AG04450 (cell line): ENCODE measurements at regions of chr7 and their contacts with region 1.

Region 1: DNA sequence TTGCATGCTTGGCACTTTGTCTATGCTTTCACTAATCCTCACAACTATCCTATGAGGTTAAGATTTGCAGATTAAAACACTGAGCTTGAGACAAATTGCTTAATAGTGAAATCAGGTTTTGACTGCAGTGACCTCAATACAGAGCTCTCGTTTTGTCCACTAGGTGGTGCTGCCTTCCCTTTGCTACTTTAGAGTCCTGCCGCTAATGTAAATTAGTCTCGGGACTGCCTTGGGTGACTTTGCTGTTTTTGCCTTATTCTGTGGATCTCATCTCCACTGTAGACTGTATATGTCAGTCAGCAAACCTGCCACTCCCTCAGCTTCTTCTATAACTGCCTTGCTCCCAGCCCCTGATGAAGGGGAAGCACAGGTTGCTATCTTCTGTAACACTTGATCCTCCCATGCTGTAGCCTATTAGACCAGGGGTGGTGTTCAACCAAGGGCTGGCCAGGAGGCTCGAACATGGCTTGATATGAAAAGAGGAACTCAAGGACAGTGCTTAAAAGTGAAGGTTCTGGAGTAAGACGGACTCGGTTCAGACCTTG is 26.0 kb downstream of the ASB4 start:
- DNase-seq: peak; percentile 27
- H3K4me3 ChIP-seq: no peak overlapping the region
- H3K27ac ChIP-seq: no peak overlapping the region
- H3K27me3 ChIP-seq: no peaks in the 10 kb centered on the region
- CTCF ChIP-seq: peak; percentile 92

Region 2: GRCh38 chr7:95491634-95492320 is 20.0 kb before region 1 on chr7:
- CTCF ChIA-PET with region 1: interaction called, 22 read pairs
- POLR2A ChIA-PET with region 1: no interaction called
- DNase-seq: no peak
- H3K4me3 ChIP-seq: no peak overlapping the region
- H3K27ac ChIP-seq: no peak overlapping the region
- H3K27me3 ChIP-seq: no peaks in the 10 kb centered on the region
- CTCF ChIP-seq: no peak

Region 3: GRCh38 chr7:95527033-95527775 is 15.4 kb after region 1 on chr7:
- CTCF ChIA-PET with region 1: interaction called, 108 read pairs
- POLR2A ChIA-PET with region 1: no interaction called
- DNase-seq: no peak
- H3K4me3 ChIP-seq: no peak overlapping the region
- H3K27ac ChIP-seq: no peak overlapping the region
- H3K27me3 ChIP-seq: no peaks in the 10 kb centered on the region
- CTCF ChIP-seq: peak; percentile 90

Region 4: GRCh38 chr7:95534796-95535195 is 23.0 kb after region 1 on chr7:
- CTCF ChIA-PET with region 1: interaction called, 108 read pairs
- POLR2A ChIA-PET with region 1: no interaction called
- DNase-seq: no peak
- H3K4me3 ChIP-seq: no peak overlapping the region
- H3K27ac ChIP-seq: no peak overlapping the region
- H3K27me3 ChIP-seq: peaks cover 2% of the 10 kb centered on the region
- CTCF ChIP-seq: no peak

Region 5: GRCh38 chr7:95684037-95684436 is 172.2 kb after region 1 on chr7:
- CTCF ChIA-PET with region 1: interaction called, 560 read pairs
- POLR2A ChIA-PET with region 1: no interaction called
- DNase-seq: no peak
- H3K4me3 ChIP-seq: no peak overlapping the region
- H3K27ac ChIP-seq: no peak overlapping the region
- H3K27me3 ChIP-seq: no peaks in the 10 kb centered on the region
- CTCF ChIP-seq: peak; percentile 48

Region 6: GRCh38 chr7:95690367-95690947 is 178.7 kb after region 1 on chr7:
- CTCF ChIA-PET with region 1: interaction called, 560 read pairs
- POLR2A ChIA-PET with region 1: interaction called, 7 read pairs
- DNase-seq: peak; percentile 10
- H3K4me3 ChIP-seq: no peak overlapping the region
- H3K27ac ChIP-seq: no peak overlapping the region
- H3K27me3 ChIP-seq: no peaks in the 10 kb centered on the region
- CTCF ChIP-seq: peak; percentile 58

Region 7: DNA sequence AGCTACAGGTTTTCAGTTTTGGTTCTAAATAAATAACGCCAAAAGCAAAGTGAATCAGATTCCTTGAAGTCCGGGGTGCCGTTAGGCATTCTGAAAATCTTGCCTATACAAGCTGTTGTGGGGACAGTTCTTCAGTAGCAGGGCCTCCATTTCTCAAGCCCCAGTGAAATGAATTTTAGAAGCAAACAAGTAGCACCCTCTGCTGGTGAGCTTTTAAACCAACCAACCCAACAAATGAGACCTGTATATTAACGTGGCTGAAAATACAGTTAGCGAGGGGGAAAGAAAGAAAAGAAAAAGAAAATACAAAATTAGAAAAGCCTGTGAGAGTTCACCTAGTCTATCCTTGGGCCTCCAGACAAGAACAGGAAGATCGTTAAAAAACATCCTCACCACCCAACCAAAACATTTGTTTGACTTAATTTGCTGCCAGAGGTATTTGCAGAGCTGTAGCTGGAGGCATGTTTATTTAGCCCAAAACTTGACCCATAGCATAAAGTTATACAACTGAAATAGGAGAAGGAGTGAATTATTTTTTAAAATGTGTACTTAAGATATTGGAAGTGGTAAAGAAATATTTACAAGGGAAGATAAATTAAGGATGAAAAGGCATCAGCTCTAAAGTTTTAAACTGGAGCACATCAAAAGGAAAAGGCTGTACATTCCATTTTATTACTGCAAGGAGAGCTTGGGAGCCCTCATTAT is 359.4 kb after region 1 on chr7:
- CTCF ChIA-PET with region 1: interaction called, 11 read pairs
- POLR2A ChIA-PET with region 1: no interaction called
- DNase-seq: peak; percentile 7
- H3K4me3 ChIP-seq: no peak overlapping the region
- H3K27ac ChIP-seq: no peak overlapping the region
- H3K27me3 ChIP-seq: no peaks in the 10 kb centered on the region
- CTCF ChIP-seq: peak; percentile 67